Activated naive CD8-positive, alpha-beta T cell treated with anti-CD3 and anti-CD28 coated beads, Interleukin-2, amount 10 ng/mL, durations not matched to agents 7 days and 5 days (primary cell): ENCODE measurements at regions of chr11 and their contacts with region 1.

Region 1: DNA sequence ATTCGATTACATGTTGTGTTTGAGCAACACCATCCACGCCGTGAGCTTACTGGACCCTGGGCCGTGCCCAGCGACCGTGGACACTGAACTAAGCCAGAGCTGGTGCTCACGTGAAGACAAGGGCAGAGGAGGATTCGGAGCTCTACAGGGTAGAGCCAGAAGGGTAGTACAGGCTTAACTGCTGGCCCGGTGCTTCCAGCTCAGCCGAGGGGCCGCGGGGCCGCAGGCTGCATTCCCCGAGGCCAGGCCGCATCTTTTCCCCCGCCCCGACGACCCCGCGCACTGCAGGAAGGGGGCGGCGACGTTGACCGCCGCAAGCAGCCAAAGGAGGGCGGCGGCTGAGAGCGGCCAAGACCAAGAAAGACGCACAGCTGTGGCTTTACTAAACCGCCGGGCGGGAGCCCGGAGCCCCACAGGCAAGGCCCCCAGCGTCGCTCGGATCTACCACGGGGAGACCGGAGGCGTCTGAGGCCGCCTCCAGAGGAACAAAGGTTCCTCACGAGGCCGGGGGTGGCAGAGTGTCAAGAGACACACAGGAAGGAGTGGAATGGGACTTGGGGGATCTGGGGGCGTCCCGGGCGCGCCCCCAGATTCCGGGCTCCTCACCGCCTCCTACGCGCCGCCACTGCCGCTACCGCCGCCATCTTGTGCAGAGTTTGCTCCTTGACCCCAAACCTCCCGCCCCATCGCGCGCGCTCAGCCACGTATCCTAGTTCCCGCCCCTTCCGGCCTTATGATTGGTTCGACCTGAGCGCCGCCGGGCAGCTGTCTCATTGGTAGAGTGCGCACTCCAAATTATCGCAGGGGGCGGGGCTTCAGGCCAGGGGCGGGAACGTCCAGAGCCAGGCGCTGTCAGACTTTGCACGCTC is at the start of gene GANAB:
- DNase-seq: peak; percentile 96
- ATAC-seq: peak; percentile 98
- H3K4me3 Mint-ChIP-seq: peak within 1 kb of the TSS; percentile 99
- H3K27ac Mint-ChIP-seq: peak within 1 kb of the TSS; percentile 96
- H3K4me1 Mint-ChIP-seq: peaks cover 24% of the 10 kb centered on the region
- H3K27me3 Mint-ChIP-seq: no peaks in the 10 kb centered on the region
- total RNA-seq, gene GANAB: 291 to 300 TPM

Region 2: DNA sequence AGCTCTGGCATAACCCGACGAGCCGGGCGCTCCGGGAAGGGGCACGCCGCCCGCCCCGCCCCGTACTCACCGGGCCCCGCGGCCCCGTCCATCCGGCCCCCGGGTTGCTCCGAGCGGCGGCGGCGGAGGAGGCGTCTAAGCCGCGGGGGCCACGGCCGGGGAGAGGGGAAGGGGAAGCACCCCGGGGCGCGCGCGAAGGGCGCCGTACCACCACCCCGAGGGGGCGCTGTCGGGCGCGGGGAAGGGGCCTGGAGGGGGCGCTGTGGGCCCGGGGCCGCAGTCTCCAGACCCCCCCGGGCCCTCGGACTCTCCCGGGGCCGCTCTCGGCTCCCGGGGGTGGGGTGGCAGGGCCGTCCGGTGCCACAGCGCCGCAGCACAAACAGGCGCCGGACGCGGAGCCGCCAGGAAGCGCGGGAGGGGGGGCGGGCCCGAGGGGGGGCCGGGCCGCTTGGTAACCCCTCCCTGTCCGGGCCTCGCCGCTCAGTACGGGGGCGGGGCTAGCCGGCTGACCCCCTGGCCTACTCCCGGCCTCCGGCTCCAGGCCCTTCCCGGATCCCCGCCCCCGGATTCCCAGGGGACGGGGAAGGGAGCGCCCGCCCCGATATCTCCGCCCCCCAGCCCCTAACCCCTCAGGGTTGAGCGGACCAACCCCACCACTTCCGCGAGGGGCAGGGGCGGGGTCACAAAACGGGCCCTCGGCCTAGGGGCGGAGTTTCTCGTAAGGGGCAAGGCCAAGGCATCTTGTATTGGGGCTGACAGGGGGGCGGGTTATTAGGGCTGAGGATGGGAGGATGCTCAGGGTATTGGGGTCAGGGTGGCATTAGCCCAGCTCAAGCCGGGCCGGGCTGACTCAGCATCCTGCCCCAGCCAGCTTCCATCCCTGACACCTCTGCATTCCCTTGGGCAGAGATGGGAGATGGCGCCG is 33.6 kb before region 1 on chr11 and contains the starts of genes EML3 and ROM1:
- POLR2A ChIA-PET with region 1: interaction called, 15 read pairs
- DNase-seq: peak; percentile 96
- ATAC-seq: peak; percentile 74
- H3K4me3 Mint-ChIP-seq: peak within 1 kb of the TSS; percentile 90
- H3K27ac Mint-ChIP-seq: peak within 1 kb of the TSS; percentile 93
- H3K4me1 Mint-ChIP-seq: peaks cover 39% of the 10 kb centered on the region
- H3K27me3 Mint-ChIP-seq: no peaks in the 10 kb centered on the region
- total RNA-seq, gene EML3: 183 to 185 TPM
- total RNA-seq, gene ROM1: 1.4 to 2.4 TPM

Region 3: DNA sequence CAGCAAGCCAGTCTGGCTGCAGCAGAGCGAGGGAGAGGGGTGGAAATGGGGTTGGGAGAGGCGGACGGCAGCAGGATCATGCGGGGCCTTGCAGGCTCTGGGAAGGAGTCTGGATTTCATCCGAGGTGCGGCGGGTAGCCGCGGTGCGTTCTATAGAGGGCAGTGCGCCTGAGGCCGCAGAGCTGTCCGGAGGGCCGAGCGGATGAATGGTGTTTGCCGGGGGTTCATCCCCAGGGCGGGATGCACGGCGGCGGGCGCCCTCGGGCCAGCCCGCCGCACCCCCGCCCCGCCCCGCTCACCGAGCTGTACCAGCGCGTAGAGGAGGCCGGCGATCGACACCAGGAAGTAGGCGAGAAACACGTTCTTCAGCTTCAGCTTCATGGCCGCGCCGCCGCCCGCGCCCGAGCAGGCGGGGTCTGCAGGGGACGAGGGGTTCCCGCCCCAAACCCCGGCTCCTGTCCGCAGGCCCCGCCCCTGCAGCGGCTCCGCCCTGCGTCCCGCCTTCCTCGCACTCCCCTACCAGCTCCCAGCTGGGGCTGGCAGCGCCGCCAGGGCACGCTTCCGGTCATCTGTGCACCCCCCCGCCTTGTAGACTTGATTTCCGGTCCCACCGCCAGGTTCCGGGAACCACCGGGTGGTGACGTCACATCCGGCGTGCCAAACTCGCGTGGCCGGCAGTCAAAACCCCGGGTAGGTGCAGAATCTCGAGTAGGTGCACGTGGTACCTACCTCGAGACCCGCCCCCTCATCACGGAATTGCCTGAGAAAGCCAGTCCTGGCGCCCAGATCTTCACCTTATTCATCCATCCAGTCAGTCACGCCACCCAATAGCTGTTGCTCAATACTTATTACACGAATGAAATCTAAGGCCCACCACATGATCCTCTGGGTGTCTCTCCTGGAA is 24.4 kb before region 1 on chr11 and contains the start of gene B3GAT3:
- POLR2A ChIA-PET with region 1: interaction called, 40 read pairs
- DNase-seq: peak; percentile 94
- ATAC-seq: peak; percentile 87
- H3K4me3 Mint-ChIP-seq: peak within 1 kb of the TSS; percentile 93
- H3K27ac Mint-ChIP-seq: peak within 1 kb of the TSS; percentile 99
- H3K4me1 Mint-ChIP-seq: peaks cover 24% of the 10 kb centered on the region
- H3K27me3 Mint-ChIP-seq: no peaks in the 10 kb centered on the region
- total RNA-seq, gene B3GAT3: 76.1 to 87.0 TPM